ENCODE measurements at regions of chr12 and their contacts with region 1.

Region 1: GRCh38 chr12:71780237-71780822 is 25.7 kb downstream of the RAB21 start:
- DNase-seq: peak; percentile 27 to 62 (median 32)
- ATAC-seq: peak; percentile 83
- H3K4me3 ChIP-seq: no peak overlapping the region
- H3K27ac ChIP-seq: no peak overlapping the region
- H3K4me1 ChIP-seq: no peaks in the 10 kb centered on the region
- H3K27me3 ChIP-seq: no peaks in the 10 kb centered on the region
- CTCF ChIP-seq: peak; percentile 55 to 73 (median 70); a peak in 5 of 6 replicates
- EP300 ChIP-seq: no peak
- POLR2A ChIP-seq: no peak
- RAD21 ChIP-seq: peak; percentile 70 to 82

Region 2: DNA sequence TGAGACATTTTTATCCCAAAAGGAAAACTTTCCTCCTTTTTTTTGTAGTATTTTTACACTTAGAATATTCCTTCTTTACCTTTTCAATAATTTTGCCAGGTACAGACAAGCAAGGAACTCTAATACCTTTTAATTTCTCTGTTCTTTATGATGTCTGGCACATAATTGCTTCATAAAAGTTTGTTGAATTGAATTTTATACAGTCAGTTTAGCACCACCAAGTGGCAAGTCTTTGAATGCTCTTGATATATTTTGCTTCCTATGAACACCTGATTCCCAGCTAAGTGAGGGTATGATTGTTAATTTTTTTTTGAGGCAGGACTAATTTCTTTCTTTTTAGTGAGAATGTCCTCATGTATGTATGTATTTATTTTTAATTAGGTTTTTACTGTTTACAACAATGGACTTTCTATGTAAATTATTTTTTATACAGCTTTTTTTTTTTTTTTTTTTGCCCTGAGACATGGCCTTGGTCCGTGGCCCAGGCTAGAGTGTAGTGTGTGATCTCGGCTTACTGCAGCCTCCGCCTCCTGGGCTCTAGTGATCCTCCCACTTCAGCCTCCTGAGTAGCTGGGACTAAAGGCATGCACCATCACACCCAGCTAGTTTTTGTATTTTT is 66.1 kb after region 1 on chr12:
- CTCF ChIA-PET with region 1: no interaction called
- POLR2A ChIA-PET with region 1: no interaction called
- in situ Hi-C with region 1: no loop called
- intact Hi-C with region 1: loop called (anchors 1 kb)
- DNase-seq: peak in 2 of 4 experiments; percentile 15 to 32
- ATAC-seq: peak; percentile 59
- H3K4me3 ChIP-seq: no peak overlapping the region
- H3K27ac ChIP-seq: no peak overlapping the region
- H3K4me1 ChIP-seq: peaks cover 4 to 5% of the 10 kb centered on the region in 2 experiments; a peak in 3 of 5 replicates
- H3K27me3 ChIP-seq: no peaks in the 10 kb centered on the region
- CTCF ChIP-seq: peak; percentile 16 to 64 (median 39); a peak in 4 of 6 replicates
- EP300 ChIP-seq: no peak
- POLR2A ChIP-seq: no peak
- RAD21 ChIP-seq: peak; percentile 27 to 42; a peak in 3 of 4 replicates

Region 3: DNA sequence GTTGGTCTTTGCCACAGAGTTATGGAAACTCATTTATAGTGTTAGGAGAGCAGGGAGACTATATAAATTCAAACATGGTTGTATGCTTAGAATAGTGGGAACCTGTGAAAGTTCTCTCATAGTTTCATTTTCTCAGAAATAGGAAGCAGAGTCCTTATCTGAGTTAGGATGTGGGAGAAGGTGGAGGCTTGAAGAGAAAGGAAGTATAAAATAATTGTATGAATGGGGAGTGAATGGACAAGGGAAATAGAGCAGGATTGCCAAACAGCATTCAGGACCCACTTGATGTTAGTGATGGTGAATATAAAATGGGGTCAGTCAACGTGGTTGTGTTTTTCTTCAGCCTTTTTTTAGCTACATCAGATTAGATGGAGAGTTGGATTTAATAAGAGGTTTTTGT is 124.3 kb after region 1 on chr12:
- CTCF ChIA-PET with region 1: no interaction called
- POLR2A ChIA-PET with region 1: no interaction called
- in situ Hi-C with region 1: no loop called
- intact Hi-C with region 1: no loop called
- DNase-seq: no peak
- ATAC-seq: no peak
- H3K4me3 ChIP-seq: no peak overlapping the region
- H3K27ac ChIP-seq: no peak overlapping the region
- H3K4me1 ChIP-seq: no peaks in the 10 kb centered on the region
- H3K27me3 ChIP-seq: no peaks in the 10 kb centered on the region
- CTCF ChIP-seq: no peak
- EP300 ChIP-seq: no peak
- POLR2A ChIP-seq: no peak
- RAD21 ChIP-seq: no peak